Dendritic cell treated with granulocyte-macrophage colony-stimulating factor and Interleukin-4, amounts not matched to agents 40 ng/mL and 50 ng/mL, for 4 days (primary cell): ENCODE measurements at regions of chr2 and their contacts with region 1.

Region 1: GRCh38 chr2:60756191-60757041 is at the start of gene PAPOLG:
- H3K4me3 Mint-ChIP-seq: peak within 1 kb of the TSS; percentile 100
- H3K27ac Mint-ChIP-seq: peak within 1 kb of the TSS; percentile 96
- H3K4me1 Mint-ChIP-seq: peaks cover 16% of the 10 kb centered on the region
- H3K27me3 Mint-ChIP-seq: no peaks in the 10 kb centered on the region

Region 2: DNA sequence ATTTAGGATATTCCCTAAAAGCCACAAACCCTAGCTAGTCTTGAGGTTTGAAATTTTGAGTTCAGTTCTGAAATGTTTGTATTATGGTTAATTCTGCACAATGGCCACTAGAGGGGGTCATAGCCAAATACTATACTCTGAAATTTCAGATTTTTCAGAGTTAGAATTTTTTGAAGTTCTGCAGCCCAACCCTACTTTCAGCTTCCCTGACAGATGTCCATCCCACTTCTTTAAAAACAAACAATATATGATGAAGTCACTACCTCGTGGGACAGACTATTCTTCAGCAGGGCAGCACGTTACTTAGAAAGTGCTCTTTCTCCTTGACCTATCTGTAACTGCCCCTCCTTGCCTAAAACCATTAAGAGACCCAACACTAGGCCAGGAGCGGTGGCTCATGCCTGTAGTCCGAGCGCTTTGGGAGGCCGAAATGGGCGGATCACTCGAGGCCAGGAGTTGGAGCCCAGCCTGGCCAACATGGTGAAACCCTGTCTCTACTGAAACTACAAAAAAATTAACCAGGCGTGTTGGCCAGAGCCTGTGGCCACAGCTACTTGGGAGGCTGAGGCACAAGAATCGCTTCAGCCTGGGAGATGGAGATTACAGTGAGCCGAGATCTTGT is 48.6 kb before region 1 on chr2:
- intact Hi-C with region 1: loop called (anchors 2 kb)
- H3K4me3 Mint-ChIP-seq: no peak overlapping the region
- H3K27ac Mint-ChIP-seq: peak overlapping the region; percentile 80
- H3K4me1 Mint-ChIP-seq: peaks cover 22% of the 10 kb centered on the region
- H3K27me3 Mint-ChIP-seq: no peaks in the 10 kb centered on the region